Transverse colon (tissue), 4 donors: ENCODE measurements at regions of chr9 and their contacts with region 1.

Region 1: GRCh38 chr9:87156247-87156646 is 208.9 kb upstream of the GAS1 start:
- DNase-seq: no peak
- H3K4me3 ChIP-seq: no peak overlapping the region
- H3K27ac ChIP-seq: no peak overlapping the region
- H3K4me1 ChIP-seq: peaks cover 0 to 5% (median 4%) of the 10 kb centered on the region in 4 donors
- H3K27me3 ChIP-seq: no peaks in the 10 kb centered on the region
- CTCF ChIP-seq: no peak
- EP300 ChIP-seq: no peak
- POLR2A ChIP-seq: no peak

Region 2: DNA sequence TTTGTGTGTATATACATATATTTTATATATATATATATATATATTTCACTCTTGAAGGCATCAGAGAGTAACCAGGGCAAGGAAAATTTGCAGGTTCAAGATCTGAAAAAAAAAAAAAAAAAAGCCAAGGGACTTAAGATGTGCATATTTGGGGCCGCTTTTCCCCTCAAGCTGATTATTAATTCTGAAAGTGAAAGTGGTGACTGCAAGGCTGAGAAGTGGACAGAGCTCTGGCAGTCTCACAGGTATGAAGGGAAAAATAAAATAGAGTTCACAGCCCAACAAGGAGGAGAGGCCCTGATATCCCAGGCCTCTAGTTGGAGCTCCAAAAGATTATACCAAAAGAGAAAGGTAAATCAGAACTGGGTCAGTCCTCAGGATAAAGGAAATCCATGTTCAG is 25.4 kb after region 1 on chr9:
- in situ Hi-C with region 1: no loop called
- intact Hi-C with region 1: loop called (anchors 1 kb)
- DNase-seq: no peak
- H3K4me3 ChIP-seq: no peak overlapping the region
- H3K27ac ChIP-seq: no peak overlapping the region
- H3K4me1 ChIP-seq: no peaks in the 10 kb centered on the region
- H3K27me3 ChIP-seq: no peaks in the 10 kb centered on the region
- CTCF ChIP-seq: no peak
- EP300 ChIP-seq: no peak
- POLR2A ChIP-seq: no peak

Region 3: GRCh38 chr9:87581513-87581912 is 425.3 kb after region 1 on chr9:
- in situ Hi-C with region 1: no loop called
- intact Hi-C with region 1: no loop called
- DNase-seq: no peak
- H3K4me3 ChIP-seq: no peak overlapping the region
- H3K27ac ChIP-seq: peak overlapping the region; percentile 48 to 71 (median 58)
- H3K4me1 ChIP-seq: peaks cover 0 to 34% (median 13%) of the 10 kb centered on the region in 4 donors
- H3K27me3 ChIP-seq: no peaks in the 10 kb centered on the region
- CTCF ChIP-seq: no peak
- EP300 ChIP-seq: no peak
- POLR2A ChIP-seq: no peak

Region 4: GRCh38 chr9:88567870-88568269 is 1411.6 kb after region 1 on chr9:
- in situ Hi-C with region 1: no loop called
- intact Hi-C with region 1: no loop called
- DNase-seq: no peak
- H3K4me3 ChIP-seq: no peak overlapping the region
- H3K27ac ChIP-seq: no peak overlapping the region
- H3K4me1 ChIP-seq: no peaks in the 10 kb centered on the region
- H3K27me3 ChIP-seq: no peaks in the 10 kb centered on the region
- CTCF ChIP-seq: no peak
- EP300 ChIP-seq: no peak
- POLR2A ChIP-seq: no peak